ENCODE measurements at regions of chr5 and their contacts with region 1.

Region 1: GRCh38 chr5:149268928-149269557 is 2.6 kb upstream of the AFAP1L1 start:
- DNase-seq: peak in 3 of 14 experiments; percentile 57 to 68 (median 68)
- ATAC-seq: peak; percentile 48
- H3K4me3 ChIP-seq: no peak overlapping the region
- H3K4me3 Mint-ChIP-seq: peak overlapping the region; percentile 18
- H3K27ac ChIP-seq: no peak overlapping the region
- H3K27ac Mint-ChIP-seq: no peak overlapping the region
- H3K4me1 ChIP-seq: peaks cover 20% of the 10 kb centered on the region
- H3K4me1 Mint-ChIP-seq: peaks cover 20% of the 10 kb centered on the region
- H3K27me3 ChIP-seq: peaks cover 14 to 24% of the 10 kb centered on the region in 2 experiments
- H3K27me3 Mint-ChIP-seq: peaks cover 29% of the 10 kb centered on the region
- CTCF ChIP-seq: peak; percentile 89

Region 2: GRCh38 chr5:148443998-148444397 is 825.0 kb before region 1 on chr5:
- CTCF ChIA-PET with region 1: no interaction called
- POLR2A ChIA-PET with region 1: no interaction called
- intact Hi-C with region 1: loop called (anchors 5 to 10 kb)
- DNase-seq: peak in 11 of 14 experiments; percentile 4 to 71 (median 25)
- ATAC-seq: peak; percentile 83
- H3K4me3 ChIP-seq: no peak overlapping the region
- H3K4me3 Mint-ChIP-seq: no peak overlapping the region
- H3K27ac ChIP-seq: no peak overlapping the region
- H3K27ac Mint-ChIP-seq: no peak overlapping the region
- H3K4me1 ChIP-seq: no peaks in the 10 kb centered on the region
- H3K4me1 Mint-ChIP-seq: no peaks in the 10 kb centered on the region
- H3K27me3 ChIP-seq: no peaks in the 10 kb centered on the region
- H3K27me3 Mint-ChIP-seq: no peaks in the 10 kb centered on the region
- CTCF ChIP-seq: peak; percentile 83

Region 3: DNA sequence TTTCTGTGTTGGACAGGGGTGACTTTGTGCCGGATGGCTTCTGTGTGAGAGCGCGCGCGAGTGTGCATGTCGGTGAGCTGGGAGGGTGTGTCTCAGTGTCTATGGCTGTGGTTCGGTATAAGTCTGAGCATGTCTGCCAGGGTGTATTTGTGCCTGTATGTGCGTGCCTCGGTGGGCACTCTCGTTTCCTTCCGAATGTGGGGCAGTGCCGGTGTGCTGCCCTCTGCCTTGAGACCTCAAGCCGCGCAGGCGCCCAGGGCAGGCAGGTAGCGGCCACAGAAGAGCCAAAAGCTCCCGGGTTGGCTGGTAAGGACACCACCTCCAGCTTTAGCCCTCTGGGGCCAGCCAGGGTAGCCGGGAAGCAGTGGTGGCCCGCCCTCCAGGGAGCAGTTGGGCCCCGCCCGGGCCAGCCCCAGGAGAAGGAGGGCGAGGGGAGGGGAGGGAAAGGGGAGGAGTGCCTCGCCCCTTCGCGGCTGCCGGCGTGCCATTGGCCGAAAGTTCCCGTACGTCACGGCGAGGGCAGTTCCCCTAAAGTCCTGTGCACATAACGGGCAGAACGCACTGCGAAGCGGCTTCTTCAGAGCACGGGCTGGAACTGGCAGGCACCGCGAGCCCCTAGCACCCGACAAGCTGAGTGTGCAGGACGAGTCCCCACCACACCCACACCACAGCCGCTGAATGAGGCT is 442.8 kb before region 1 on chr5 and contains the start of gene ADRB2:
- CTCF ChIA-PET with region 1: no interaction called
- POLR2A ChIA-PET with region 1: no interaction called
- intact Hi-C with region 1: loop called (anchors 5 to 10 kb)
- DNase-seq: peak; percentile 70 to 96 (median 82)
- ATAC-seq: peak; percentile 86
- H3K4me3 ChIP-seq: peak within 1 kb of the TSS; percentile 88
- H3K4me3 Mint-ChIP-seq: peak within 1 kb of the TSS; percentile 84
- H3K27ac ChIP-seq: peak within 1 kb of the TSS; percentile 53 to 68
- H3K27ac Mint-ChIP-seq: peak within 1 kb of the TSS; percentile 32
- H3K4me1 ChIP-seq: peaks cover 22% of the 10 kb centered on the region
- H3K4me1 Mint-ChIP-seq: peaks cover 30% of the 10 kb centered on the region
- H3K27me3 ChIP-seq: no peaks in the 10 kb centered on the region
- H3K27me3 Mint-ChIP-seq: peaks cover 13% of the 10 kb centered on the region
- CTCF ChIP-seq: no peak
- total RNA-seq, gene ADRB2: 1.2 to 1.6 TPM

Region 4: DNA sequence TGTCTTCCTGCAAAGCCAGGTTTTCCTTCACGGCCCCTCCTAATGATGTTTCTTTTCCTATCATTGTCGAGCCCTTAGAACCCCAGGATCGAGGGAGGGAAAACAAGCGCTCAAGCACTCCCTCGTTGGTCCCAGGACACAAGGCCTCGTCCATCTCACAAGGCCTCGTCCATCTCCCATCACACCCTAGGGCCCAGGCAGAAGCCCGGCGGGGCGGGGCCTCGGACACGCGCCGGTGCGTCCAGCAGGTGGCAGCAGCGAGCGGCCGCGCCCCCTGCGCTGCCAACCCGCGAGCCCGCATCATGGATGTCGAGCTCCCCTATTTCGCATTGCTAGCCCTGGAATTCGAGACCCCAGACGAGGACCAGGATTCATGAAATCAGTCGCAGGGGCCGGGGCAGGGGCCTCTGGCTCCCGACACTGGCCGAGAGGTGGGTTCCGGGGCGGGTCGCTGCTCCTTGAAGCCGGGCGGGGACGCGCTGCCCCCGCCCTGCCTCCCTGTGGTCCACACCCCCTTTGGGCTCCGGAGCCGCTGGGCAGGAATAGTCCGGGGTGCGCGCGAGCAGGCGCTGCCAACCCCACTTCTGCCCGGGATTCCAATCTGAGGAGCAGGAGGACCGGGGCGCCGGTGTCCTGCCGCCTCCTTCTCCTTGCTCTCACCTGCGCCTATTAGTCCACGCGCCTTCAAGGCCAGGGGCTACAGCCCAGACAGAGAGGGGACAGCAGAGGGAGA is 127.7 kb before region 1 on chr5 and contains the start of gene ABLIM3:
- CTCF ChIA-PET with region 1: interaction called, 33 read pairs
- POLR2A ChIA-PET with region 1: interaction called, 9 read pairs
- intact Hi-C with region 1: loop called (anchors 1 kb)
- DNase-seq: peak; percentile 40 to 82 (median 64)
- ATAC-seq: peak; percentile 94
- H3K4me3 ChIP-seq: peak within 1 kb of the TSS; percentile 52
- H3K4me3 Mint-ChIP-seq: peak within 1 kb of the TSS; percentile 71
- H3K27ac ChIP-seq: no peak within 1 kb of the TSS
- H3K27ac Mint-ChIP-seq: no peak within 1 kb of the TSS
- H3K4me1 ChIP-seq: peaks cover 10% of the 10 kb centered on the region
- H3K4me1 Mint-ChIP-seq: peaks cover 5% of the 10 kb centered on the region
- H3K27me3 ChIP-seq: peaks cover 15 to 26% of the 10 kb centered on the region in 2 experiments
- H3K27me3 Mint-ChIP-seq: peaks cover 31% of the 10 kb centered on the region
- CTCF ChIP-seq: peak; percentile 83
- total RNA-seq, gene ABLIM3: not detected

Region 5: GRCh38 chr5:149240354-149240998 is 28.6 kb before region 1 on chr5:
- CTCF ChIA-PET with region 1: interaction called, 4 read pairs
- POLR2A ChIA-PET with region 1: interaction called, 18 read pairs
- intact Hi-C with region 1: loop called in 1 of 2 experiments (anchors 1 kb)
- DNase-seq: peak; percentile 73 to 93 (median 84)
- ATAC-seq: peak; percentile 99
- H3K4me3 ChIP-seq: no peak overlapping the region
- H3K4me3 Mint-ChIP-seq: peak overlapping the region; percentile 54
- H3K27ac ChIP-seq: peak overlapping the region; percentile 49 to 51
- H3K27ac Mint-ChIP-seq: peak overlapping the region; percentile 91
- H3K4me1 ChIP-seq: peaks cover 41% of the 10 kb centered on the region
- H3K4me1 Mint-ChIP-seq: peaks cover 70% of the 10 kb centered on the region
- H3K27me3 ChIP-seq: no peaks in the 10 kb centered on the region
- H3K27me3 Mint-ChIP-seq: no peaks in the 10 kb centered on the region
- CTCF ChIP-seq: no peak

Region 6: GRCh38 chr5:149611326-149611725 is 342.3 kb after region 1 on chr5:
- CTCF ChIA-PET with region 1: no interaction called
- POLR2A ChIA-PET with region 1: no interaction called
- intact Hi-C with region 1: no loop called
- DNase-seq: no peak
- ATAC-seq: no peak
- H3K4me3 ChIP-seq: no peak overlapping the region
- H3K4me3 Mint-ChIP-seq: no peak overlapping the region
- H3K27ac ChIP-seq: no peak overlapping the region
- H3K27ac Mint-ChIP-seq: no peak overlapping the region
- H3K4me1 ChIP-seq: peaks cover 6% of the 10 kb centered on the region
- H3K4me1 Mint-ChIP-seq: peaks cover 3% of the 10 kb centered on the region
- H3K27me3 ChIP-seq: no peaks in the 10 kb centered on the region
- H3K27me3 Mint-ChIP-seq: no peaks in the 10 kb centered on the region
- CTCF ChIP-seq: no peak

Measured in CD4-positive, alpha-beta T cell (primary cell).